Activated CD4-positive, alpha-beta T cell treated with anti-CD3 and anti-CD28 coated beads for 36 hours (primary cell): ENCODE measurements at regions of chr21 and their contacts with region 1.

Region 1: DNA sequence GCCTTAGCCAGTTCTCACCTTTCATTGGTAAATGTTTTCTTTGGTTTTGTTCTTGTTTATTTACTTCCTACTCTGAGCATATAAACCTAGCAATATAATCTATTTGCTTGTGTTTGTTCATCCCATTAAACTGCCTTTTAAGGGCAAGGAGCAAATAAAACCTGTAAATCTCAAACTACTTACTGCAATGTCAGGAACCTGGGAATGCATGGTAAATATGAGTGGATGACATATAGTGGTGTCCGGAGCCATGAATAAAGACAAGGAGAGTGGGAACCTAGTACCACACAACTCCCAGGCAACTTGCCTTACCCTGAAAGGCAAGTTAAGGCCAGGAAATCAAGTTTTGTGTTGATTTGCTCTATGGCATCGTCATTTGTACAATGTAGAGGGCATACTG is 1133.7 kb upstream of the NCAM2 start:
- DNase-seq: no peak
- ATAC-seq: no peak
- H3K4me3 Mint-ChIP-seq: no peak overlapping the region
- H3K27ac Mint-ChIP-seq: no peak overlapping the region
- H3K4me1 Mint-ChIP-seq: no peaks in the 10 kb centered on the region
- H3K27me3 Mint-ChIP-seq: no peaks in the 10 kb centered on the region

Region 2: DNA sequence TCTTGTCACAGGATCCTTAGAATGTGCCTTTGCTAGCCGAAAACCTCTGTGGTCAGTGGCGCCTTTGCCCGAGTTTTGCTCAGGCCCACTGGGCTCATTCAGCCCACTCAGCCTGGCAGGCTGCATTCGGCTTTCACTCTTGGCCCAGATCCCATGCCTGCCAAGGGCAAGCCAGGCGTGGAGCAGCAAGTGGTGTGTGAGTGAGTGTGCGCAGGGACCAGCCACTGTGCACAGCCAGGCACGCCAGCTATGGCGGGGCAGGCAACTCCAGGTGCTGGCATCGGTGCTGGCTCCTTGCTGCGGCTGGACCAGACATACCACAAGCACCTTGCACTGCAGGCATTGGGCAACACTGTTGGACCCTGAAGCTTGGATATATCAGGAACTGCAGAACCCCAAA is 11.4 kb before region 1 on chr21:
- CTCF ChIA-PET with region 1: no interaction called
- POLR2A ChIA-PET with region 1: no interaction called
- intact Hi-C with region 1: loop called in 1 of 2 experiments (anchors 1 kb)
- DNase-seq: no peak
- ATAC-seq: no peak
- H3K4me3 Mint-ChIP-seq: no peak overlapping the region
- H3K27ac Mint-ChIP-seq: no peak overlapping the region
- H3K4me1 Mint-ChIP-seq: no peaks in the 10 kb centered on the region
- H3K27me3 Mint-ChIP-seq: no peaks in the 10 kb centered on the region